Right ventricle myocardium inferior (tissue), 1 donor: ENCODE measurements at regions of chr2 and their contacts with region 1.

Region 1: DNA sequence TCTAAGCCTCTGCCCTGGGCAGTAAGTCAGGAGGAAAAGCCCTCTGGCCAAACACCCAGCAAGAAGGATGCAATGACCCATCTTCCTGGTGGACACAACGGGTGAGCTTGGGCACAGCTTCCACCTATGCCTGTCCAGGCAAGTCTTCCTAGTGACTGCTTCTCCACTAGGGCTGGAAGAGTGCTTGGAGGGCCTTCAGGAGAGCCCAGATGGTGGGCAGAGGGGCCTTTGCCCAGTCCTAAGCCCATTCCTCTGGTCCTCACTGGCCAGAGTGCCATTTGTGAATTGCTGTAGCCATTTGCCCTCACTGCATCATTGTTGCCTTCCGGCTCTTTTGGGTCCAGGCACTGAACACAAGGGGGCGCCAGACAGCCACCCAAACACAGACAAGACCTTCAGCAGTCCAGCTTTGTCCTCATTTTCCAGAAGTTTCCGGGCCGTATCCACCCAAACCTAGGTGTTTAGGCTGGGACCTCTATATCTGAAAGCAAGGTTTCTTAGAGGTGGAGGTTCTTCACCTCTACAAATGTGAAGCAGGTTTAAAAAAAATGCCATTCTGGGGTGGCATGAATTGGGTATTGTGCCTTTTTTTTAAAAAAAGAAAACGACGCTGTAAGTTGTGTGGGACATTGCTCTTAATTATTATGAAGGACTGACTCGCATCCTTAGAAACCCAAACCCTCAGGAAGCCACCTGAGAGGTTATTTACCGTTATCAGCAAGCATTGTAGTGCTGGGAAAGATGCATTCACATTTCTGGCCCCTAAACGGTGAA is 29.5 kb downstream of the PAX8 start:
- DNase-seq: peak; percentile 88
- ATAC-seq: peak; percentile 82

Region 2: GRCh38 chr2:113370478-113371091 is 121.4 kb after region 1 on chr2:
- intact Hi-C with region 1: loop called (anchors 1 kb)
- DNase-seq: no peak
- ATAC-seq: peak; percentile 86